PC-9 (cell line): ENCODE measurements at regions of chr15 and their contacts with region 1.

Region 1: DNA sequence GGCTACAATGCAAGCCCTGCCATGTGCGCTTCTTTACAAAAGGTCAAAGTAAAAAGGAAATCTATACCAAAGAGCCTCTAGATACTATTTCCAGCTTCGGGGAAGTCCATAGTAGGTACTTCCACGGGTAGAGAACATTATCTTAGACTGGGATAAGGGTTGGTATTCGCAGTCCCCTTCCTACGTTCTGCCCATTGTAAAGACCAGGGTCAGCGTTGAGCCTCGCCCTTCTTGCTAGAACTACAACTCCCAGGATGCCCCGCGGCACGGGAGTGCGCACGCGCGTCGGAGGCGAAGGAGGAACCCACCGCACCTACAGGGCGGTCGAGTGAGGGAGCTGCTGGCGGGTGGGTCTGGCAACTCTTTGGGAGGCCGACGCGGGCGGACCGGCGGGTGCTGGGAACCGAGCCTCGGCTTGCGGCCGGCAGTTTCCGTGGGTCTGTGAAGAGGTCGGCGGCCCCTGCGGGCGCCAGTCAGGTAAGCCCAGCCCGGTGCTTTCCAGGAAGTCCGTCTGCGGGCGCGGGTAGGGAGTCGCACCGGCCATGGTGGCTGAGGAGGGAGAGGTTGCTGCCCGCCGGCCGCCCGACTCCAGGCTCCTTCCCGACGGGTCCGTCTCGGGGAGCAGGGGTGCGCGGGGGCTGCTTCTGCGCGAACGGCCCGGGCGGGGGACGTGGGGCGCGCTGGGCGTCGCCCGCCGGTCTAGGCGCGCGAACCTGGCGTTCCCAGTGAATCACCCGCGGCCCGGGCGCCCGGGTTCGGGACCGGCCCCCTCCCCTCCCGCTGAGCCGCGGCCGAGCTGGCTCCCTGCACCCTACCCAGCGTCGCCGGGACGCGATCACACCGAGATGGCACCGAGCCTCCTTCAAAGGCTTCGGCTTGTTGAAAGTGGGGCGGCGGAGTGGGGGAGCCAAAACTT is at the start of gene TMOD3:
- DNase-seq: peak; percentile 77 to 91
- H3K4me3 ChIP-seq: peak within 1 kb of the TSS; percentile 71
- H3K27ac ChIP-seq: peak within 1 kb of the TSS; percentile 97
- H3K4me1 ChIP-seq: peaks cover 69% of the 10 kb centered on the region
- H3K27me3 ChIP-seq: no peaks in the 10 kb centered on the region
- CTCF ChIP-seq: no peak
- total RNA-seq, gene TMOD3: 94.9 and 125 TPM in 2 replicates

Region 2: DNA sequence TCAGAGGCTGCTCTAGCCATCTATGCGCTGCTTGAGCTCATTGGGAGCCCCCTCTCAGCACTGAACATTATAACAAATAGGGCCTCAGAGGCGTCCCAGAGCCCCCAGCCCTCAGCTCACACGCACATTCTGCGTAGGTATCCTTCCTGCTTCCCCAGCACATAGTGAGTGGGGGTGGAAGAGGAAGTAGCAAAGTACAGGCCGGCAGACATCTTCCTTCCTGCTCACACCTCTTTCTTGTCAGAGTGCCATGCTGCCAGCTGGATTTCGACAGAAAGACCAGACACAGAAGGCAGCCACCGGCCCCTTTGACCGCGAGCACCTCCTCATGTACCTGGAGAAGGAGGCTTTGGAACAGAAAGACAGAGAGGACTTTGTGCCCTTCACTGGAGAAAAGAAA is 61.6 kb before region 1 on chr15:
- CTCF ChIA-PET with region 1: no interaction called
- POLR2A ChIA-PET with region 1: no interaction called
- intact Hi-C with region 1: no loop called
- DNase-seq: no peak
- H3K4me3 ChIP-seq: no peak overlapping the region
- H3K27ac ChIP-seq: no peak overlapping the region
- H3K4me1 ChIP-seq: no peaks in the 10 kb centered on the region
- H3K27me3 ChIP-seq: no peaks in the 10 kb centered on the region
- CTCF ChIP-seq: no peak

Region 3: DNA sequence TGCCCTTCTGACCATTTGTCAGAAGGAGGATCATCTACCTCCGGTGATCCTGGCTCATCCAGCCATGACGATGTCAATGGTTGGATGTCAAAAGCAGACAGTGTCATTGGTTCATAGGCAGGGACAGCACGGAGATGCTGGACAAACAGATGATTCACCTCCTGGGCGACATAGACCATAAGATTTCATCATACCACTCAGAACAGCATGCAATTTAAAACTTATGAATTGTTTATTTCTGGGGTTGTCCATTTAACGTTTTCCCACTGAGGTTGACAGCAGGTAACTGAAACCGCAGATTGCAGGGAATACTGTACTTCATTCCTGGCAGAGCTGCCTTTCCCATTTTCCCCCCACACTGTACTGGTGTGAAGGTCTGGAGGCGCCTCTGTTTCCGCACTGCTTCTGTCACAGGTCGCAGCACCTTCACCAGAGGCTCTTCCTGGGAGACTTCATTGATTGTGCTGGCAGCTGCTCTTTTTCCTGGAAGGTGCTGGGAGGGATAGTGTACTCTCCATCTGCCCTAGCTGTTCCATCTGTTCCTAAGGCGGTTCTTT is 32.7 kb before region 1 on chr15:
- CTCF ChIA-PET with region 1: interaction called, 3 read pairs
- POLR2A ChIA-PET with region 1: interaction called, 23 read pairs
- intact Hi-C with region 1: no loop called
- DNase-seq: peak; percentile 15 to 57
- H3K4me3 ChIP-seq: peak overlapping the region; percentile 20; the same call in 1 of the 2 replicates
- H3K27ac ChIP-seq: peak overlapping the region; percentile 76
- H3K4me1 ChIP-seq: peaks cover 27% of the 10 kb centered on the region
- H3K27me3 ChIP-seq: no peaks in the 10 kb centered on the region
- CTCF ChIP-seq: no peak

Region 4: DNA sequence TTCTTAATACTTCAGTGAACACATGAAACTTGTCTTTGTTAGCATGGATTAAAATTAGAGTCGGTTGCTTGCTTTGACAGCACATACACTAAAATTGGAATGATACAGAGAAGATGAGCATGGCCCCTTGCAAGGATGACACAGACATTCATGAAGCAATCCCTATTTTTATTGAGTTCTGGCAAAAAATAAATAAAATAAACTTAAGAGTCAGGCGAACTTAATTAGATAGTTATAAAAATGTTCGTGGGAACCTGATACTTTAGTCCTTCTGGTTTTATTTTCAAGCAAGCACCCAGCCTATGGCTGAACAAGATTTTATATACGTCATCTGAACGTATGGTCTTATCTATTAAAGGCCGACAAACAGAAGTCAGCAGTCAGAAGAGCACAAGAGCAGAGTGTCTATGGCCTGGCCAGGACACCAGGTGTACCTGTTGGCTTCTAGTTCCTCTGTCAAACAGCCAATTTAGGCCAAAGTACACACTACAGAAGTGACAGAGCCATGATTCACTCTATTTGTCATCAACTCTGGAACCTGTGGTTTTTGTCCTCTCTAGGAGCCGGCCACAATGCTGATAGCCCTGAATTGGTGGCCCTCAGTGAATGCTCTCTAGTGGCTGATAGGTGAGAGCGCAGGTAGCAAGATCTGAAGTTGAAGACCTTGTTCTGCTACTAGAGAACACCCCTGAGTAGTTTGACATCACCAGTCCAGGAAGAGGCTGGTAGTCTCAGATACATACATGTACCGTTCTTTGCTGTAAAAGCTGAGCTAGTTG is 77.7 kb after region 1 on chr15:
- CTCF ChIA-PET with region 1: interaction called, 9 read pairs
- POLR2A ChIA-PET with region 1: no interaction called
- intact Hi-C with region 1: loop called (anchors 1 kb)
- DNase-seq: peak; percentile 83 to 97
- H3K4me3 ChIP-seq: peak overlapping the region; percentile 26; the same call in 1 of the 2 replicates
- H3K27ac ChIP-seq: peak overlapping the region; percentile 69
- H3K4me1 ChIP-seq: peaks cover 27% of the 10 kb centered on the region
- H3K27me3 ChIP-seq: no peaks in the 10 kb centered on the region
- CTCF ChIP-seq: peak; percentile 60

Region 5: DNA sequence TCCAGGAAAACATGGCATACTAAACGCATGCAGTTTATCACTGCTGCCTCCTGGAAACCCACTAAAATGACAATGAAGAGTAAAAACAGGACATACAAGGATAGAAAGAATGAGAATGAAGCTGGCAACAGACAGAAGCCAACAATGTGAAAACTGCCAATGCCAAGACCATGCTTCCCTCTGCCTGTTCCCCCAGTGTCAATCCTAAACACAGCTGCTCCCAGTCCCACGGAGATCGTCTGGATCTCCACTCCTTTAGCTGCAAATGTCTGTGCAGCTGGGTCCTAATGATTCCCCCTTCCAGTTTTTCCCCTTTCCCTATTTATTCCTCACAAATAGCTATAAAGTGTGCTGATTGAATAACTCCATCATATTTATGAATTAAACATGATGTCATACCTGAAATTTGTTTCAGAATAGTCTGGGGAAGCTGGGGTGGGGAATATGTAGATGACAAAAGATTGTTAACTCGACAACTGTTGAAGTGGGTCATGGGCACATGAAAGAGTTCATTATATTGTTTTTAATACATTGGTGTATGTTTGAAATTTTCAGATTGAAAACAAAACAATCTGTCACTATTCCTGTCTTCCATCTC is 126.0 kb after region 1 on chr15:
- CTCF ChIA-PET with region 1: no interaction called
- POLR2A ChIA-PET with region 1: no interaction called
- intact Hi-C with region 1: no loop called
- DNase-seq: no peak
- H3K4me3 ChIP-seq: no peak overlapping the region
- H3K27ac ChIP-seq: no peak overlapping the region
- H3K4me1 ChIP-seq: no peaks in the 10 kb centered on the region
- H3K27me3 ChIP-seq: no peaks in the 10 kb centered on the region
- CTCF ChIP-seq: no peak